ENCODE measurements at regions of chr12 and their contacts with region 1.

Region 1: GRCh38 chr12:66169221-66170170 is at the start of gene TMBIM4:
- DNase-seq: peak; percentile 87 to 91
- ATAC-seq: peak; percentile 71 to 89 (median 77)
- H3K4me3 ChIP-seq: peak within 1 kb of the TSS; percentile 82
- H3K4me3 Mint-ChIP-seq: peak within 1 kb of the TSS; percentile 98
- H3K27ac ChIP-seq: peak within 1 kb of the TSS; percentile 98
- H3K27ac Mint-ChIP-seq: peak within 1 kb of the TSS; percentile 98 to 99
- H3K4me1 ChIP-seq: peaks cover 15% of the 10 kb centered on the region
- H3K4me1 Mint-ChIP-seq: peaks cover 44 to 53% of the 10 kb centered on the region in 2 donors
- H3K27me3 ChIP-seq: no peaks in the 10 kb centered on the region
- H3K27me3 Mint-ChIP-seq: no peaks in the 10 kb centered on the region
- CTCF ChIP-seq: no peak
- total RNA-seq, gene TMBIM4: 46.6 to 72.0 (median 63.2) TPM

Region 2: GRCh38 chr12:66025477-66025876 is 144.0 kb before region 1 on chr12:
- intact Hi-C with region 1: no loop called
- DNase-seq: no peak
- ATAC-seq: no peak
- H3K4me3 ChIP-seq: no peak overlapping the region
- H3K4me3 Mint-ChIP-seq: no peak overlapping the region
- H3K27ac ChIP-seq: no peak overlapping the region
- H3K27ac Mint-ChIP-seq: no peak overlapping the region
- H3K4me1 ChIP-seq: no peaks in the 10 kb centered on the region
- H3K4me1 Mint-ChIP-seq: no peaks in the 10 kb centered on the region
- H3K27me3 ChIP-seq: no peaks in the 10 kb centered on the region
- H3K27me3 Mint-ChIP-seq: peaks cover 11 to 43% of the 10 kb centered on the region in 2 donors
- CTCF ChIP-seq: no peak

Region 3: GRCh38 chr12:66130277-66131066 is 39.0 kb before region 1 on chr12 and contains the start of gene LLPH:
- intact Hi-C with region 1: loop called (anchors 2 kb)
- DNase-seq: peak; percentile 79 to 94
- ATAC-seq: peak; percentile 95 to 97 (median 97)
- H3K4me3 ChIP-seq: peak within 1 kb of the TSS; percentile 79
- H3K4me3 Mint-ChIP-seq: peak within 1 kb of the TSS; percentile 96
- H3K27ac ChIP-seq: peak within 1 kb of the TSS; percentile 91
- H3K27ac Mint-ChIP-seq: peak within 1 kb of the TSS; percentile 96 to 97
- H3K4me1 ChIP-seq: peaks cover 10% of the 10 kb centered on the region
- H3K4me1 Mint-ChIP-seq: peaks cover 50 to 58% of the 10 kb centered on the region in 2 donors
- H3K27me3 ChIP-seq: no peaks in the 10 kb centered on the region
- H3K27me3 Mint-ChIP-seq: no peaks in the 10 kb centered on the region
- CTCF ChIP-seq: no peak
- total RNA-seq, gene LLPH: 24.9 to 27.3 (median 25.5) TPM

Region 4: GRCh38 chr12:66188584-66189485 is 19.3 kb after region 1 on chr12 and contains the start of gene IRAK3:
- intact Hi-C with region 1: loop called (anchors 2 kb)
- DNase-seq: peak; percentile 51 to 58
- ATAC-seq: peak; percentile 84 to 89 (median 89)
- H3K4me3 ChIP-seq: peak within 1 kb of the TSS; percentile 42
- H3K4me3 Mint-ChIP-seq: peak within 1 kb of the TSS; percentile 79
- H3K27ac ChIP-seq: peak within 1 kb of the TSS; percentile 51
- H3K27ac Mint-ChIP-seq: peak within 1 kb of the TSS; percentile 40 to 53
- H3K4me1 ChIP-seq: peaks cover 11% of the 10 kb centered on the region
- H3K4me1 Mint-ChIP-seq: peaks cover 0 to 7% of the 10 kb centered on the region in 2 donors
- H3K27me3 ChIP-seq: peaks cover 8% of the 10 kb centered on the region
- H3K27me3 Mint-ChIP-seq: peaks cover 37 to 43% of the 10 kb centered on the region in 2 donors
- CTCF ChIP-seq: no peak
- total RNA-seq, gene IRAK3: 3.7 to 9.9 (median 9.2) TPM

Region 5: GRCh38 chr12:66235626-66236281 is 66.3 kb after region 1 on chr12:
- intact Hi-C with region 1: loop called (anchors 2 kb)
- DNase-seq: peak in 1 of 2 donors; percentile 9
- ATAC-seq: no peak
- H3K4me3 ChIP-seq: peak overlapping the region; percentile 18
- H3K4me3 Mint-ChIP-seq: peak overlapping the region; percentile 76
- H3K27ac ChIP-seq: no peak overlapping the region
- H3K27ac Mint-ChIP-seq: no peak overlapping the region
- H3K4me1 ChIP-seq: peaks cover 12% of the 10 kb centered on the region
- H3K4me1 Mint-ChIP-seq: peaks cover 0 to 5% of the 10 kb centered on the region in 2 donors
- H3K27me3 ChIP-seq: no peaks in the 10 kb centered on the region
- H3K27me3 Mint-ChIP-seq: peaks cover 8 to 26% of the 10 kb centered on the region in 2 donors
- CTCF ChIP-seq: peak; percentile 28

Region 6: DNA sequence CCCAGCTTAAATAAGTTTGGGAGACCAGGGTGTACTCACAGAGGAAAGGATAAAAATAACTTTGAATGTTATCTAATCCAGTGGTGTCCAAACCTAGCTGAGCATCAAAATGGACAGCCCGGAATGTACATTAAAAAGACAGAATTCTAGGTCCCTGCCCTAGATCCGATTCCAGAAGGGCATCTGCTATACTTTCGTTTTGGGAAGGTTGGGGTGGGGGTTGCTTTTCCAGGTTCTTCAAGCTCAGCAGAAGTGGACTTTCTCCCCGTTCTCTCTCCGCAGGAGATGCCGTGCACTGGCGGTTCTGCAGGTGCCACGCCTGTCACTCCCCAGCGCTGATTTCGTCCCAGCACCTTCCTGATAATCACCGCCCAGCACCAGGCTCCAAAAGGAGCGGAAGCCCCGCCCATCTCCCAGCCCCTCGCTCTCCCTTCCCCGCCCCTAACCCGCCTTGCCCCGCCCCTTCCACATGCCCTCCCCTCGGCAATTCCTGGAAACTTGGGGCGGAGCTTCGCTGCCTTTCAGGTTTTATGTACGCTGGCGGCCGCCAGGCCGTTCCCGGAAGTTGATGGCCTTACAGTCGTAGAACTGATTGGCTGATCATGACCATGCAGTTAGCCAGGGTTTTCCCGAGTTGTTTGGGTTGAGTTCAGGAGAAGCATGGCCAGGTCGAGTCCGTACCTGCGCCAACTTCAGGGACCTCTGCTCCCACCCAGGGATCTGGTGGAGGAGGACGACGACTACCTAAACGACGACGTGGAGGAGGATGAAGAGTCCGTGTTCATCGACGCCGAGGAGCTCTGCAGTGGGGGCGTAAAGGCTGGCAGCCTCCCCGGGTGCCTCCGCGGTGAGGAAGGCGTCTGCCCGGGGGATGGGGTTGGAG is 132.7 kb after region 1 on chr12 and contains the start of gene HELB:
- intact Hi-C with region 1: loop called (anchors 2 kb)
- DNase-seq: peak; percentile 82 to 97
- ATAC-seq: peak; percentile 86 to 94 (median 89)
- H3K4me3 ChIP-seq: peak within 1 kb of the TSS; percentile 91
- H3K4me3 Mint-ChIP-seq: peak within 1 kb of the TSS; percentile 98
- H3K27ac ChIP-seq: peak within 1 kb of the TSS; percentile 84
- H3K27ac Mint-ChIP-seq: peak within 1 kb of the TSS; percentile 82 to 99
- H3K4me1 ChIP-seq: peaks cover 14% of the 10 kb centered on the region
- H3K4me1 Mint-ChIP-seq: peaks cover 39 to 47% of the 10 kb centered on the region in 2 donors
- H3K27me3 ChIP-seq: no peaks in the 10 kb centered on the region
- H3K27me3 Mint-ChIP-seq: no peaks in the 10 kb centered on the region
- CTCF ChIP-seq: no peak
- total RNA-seq, gene HELB: 29.2 to 45.6 (median 36.6) TPM

Region 7: DNA sequence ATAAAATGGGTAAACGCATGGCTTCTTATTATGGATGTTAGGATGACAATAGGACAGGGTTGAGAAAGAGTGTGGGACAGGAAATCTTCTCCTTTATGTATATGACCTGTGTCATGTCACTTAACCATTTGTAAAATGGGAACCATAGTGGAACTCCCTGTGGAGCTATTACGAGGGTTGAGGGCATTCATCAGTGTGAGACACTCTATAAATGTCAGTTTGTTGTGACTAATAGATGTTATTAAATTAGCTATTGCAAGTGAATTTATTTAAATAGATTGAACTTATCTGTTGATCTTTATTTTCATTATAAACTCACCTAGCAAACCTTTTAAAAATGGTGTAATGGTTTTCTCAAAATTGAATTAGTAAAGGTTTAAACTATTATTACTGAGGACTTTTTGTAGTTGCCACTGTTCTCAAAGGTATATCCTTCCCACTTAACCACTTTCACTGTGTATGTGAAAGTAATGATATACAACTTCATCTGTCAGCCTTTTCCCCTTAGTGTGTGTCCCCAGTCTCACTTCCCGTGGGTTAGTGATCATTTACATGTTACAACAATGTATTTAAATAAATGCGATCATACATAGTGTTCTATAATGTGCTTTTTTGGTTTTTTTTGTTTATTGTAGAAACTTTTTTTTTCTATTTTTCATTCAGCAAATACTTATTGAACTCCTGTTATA is 149.9 kb after region 1 on chr12:
- intact Hi-C with region 1: no loop called
- DNase-seq: no peak
- ATAC-seq: no peak
- H3K4me3 ChIP-seq: no peak overlapping the region
- H3K4me3 Mint-ChIP-seq: no peak overlapping the region
- H3K27ac ChIP-seq: no peak overlapping the region
- H3K27ac Mint-ChIP-seq: peak overlapping the region in 1 of 2 donors; percentile 47
- H3K4me1 ChIP-seq: no peaks in the 10 kb centered on the region
- H3K4me1 Mint-ChIP-seq: peaks cover 12 to 24% of the 10 kb centered on the region in 2 donors
- H3K27me3 ChIP-seq: no peaks in the 10 kb centered on the region
- H3K27me3 Mint-ChIP-seq: no peaks in the 10 kb centered on the region
- CTCF ChIP-seq: no peak

Measured in natural killer cell (primary cell).